Activated T-helper 2 cell treated with anti-CD3 and anti-CD28 coated beads, Interferon-gamma antibody, Interleukin-2, Interleukin-4, amounts not matched to agents 10 μg/mL and 5 μg/mL and 100 μg/mL, durations not matched to agents 14 hours and 24 hours and 36 hours (primary cell): ENCODE measurements at regions of chr7 and their contacts with region 1.

Region 1: DNA sequence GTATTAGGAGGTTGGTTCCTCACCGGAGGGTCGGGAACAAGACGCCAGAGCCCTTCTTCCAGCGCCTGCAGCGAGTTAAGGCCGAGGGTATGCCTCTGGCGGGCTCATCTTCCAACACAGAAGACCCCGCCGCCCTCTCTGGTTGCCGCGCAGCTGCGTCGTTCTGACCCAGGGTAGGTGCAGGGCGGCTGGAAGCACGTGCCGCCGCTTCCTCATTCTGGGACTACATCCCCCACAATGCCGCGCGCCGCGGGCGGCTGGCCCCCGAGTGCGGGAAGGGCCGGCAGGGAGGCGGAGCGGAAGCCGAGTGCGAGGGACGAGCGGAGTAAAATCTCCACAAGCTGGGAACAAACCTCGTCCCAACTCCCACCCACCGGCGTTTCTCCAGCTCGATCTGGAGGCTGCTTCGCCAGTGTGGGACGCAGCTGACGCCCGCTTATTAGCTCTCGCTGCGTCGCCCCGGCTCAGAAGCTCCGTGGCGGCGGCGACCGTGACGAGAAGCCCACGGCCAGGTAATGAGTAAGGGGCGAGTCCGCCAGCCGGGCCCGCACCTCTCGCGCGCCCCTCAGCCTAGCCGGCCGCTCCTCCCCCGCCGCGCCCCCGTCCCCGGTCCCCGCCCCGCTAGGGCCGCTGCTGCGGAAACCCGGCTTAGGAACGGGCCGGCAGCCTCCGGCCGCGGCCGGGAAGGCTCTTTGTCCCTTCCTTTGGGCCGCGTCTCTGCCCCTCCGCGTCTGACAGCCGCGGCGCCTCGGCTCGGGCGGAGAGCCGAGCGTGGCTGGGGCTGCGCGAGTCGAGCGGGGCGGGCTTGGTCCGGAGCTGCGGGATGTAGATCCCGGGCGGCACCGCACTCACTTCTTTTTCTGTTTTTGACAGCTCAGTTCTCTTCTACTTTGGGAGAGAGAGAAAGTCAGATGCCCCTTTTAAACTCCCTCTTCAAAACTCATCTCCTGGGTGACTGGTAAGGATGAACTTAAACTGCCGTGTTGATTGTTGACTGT is at the start of gene CCDC126:
- DNase-seq: peak; percentile 73
- H3K4me3 Mint-ChIP-seq: peak within 1 kb of the TSS; percentile 89
- H3K27ac Mint-ChIP-seq: peak within 1 kb of the TSS; percentile 78
- H3K4me1 Mint-ChIP-seq: peaks cover 53% of the 10 kb centered on the region
- H3K27me3 Mint-ChIP-seq: peaks cover 5% of the 10 kb centered on the region
- total RNA-seq, gene CCDC126: 6.1 and 6.3 TPM in 2 replicates

Region 2: DNA sequence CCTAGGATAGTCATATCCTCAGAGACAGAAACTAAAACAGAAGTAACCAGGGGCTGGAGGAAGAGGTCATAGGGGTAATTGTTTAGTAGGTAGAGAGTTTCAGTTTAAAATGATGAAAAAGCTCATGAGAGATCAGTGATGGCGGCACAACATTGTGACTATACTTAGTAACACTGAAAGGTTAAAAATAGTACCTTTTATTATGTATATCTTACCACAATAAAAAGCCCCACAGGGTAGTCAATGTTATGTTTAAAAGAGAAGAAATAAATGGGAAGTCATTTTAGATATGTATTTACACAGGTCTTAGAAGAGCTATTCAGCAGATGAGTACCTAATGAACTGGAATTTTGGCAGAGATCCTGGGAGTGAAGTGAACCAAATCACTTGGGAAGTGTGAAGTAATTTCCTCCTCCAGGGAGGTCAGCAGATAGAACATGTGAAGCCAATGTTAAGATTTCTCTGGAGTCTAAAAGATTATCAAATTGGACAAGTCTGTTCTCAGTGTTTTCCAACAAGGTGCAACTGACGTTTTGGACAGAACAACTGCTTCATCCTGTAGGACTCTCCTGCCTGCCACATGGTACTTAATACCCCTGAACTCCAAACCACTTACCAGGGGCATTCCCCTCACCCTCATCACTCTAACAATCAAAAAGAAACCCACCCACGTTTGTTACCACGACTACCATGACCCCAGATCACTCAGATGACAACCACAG is 1658.1 kb before region 1 on chr7:
- intact Hi-C with region 1: loop called (anchors 10 kb)
- DNase-seq: peak; percentile 30
- H3K4me3 Mint-ChIP-seq: peak overlapping the region; percentile 41
- H3K27ac Mint-ChIP-seq: peak overlapping the region; percentile 88
- H3K4me1 Mint-ChIP-seq: peaks cover 59% of the 10 kb centered on the region
- H3K27me3 Mint-ChIP-seq: no peaks in the 10 kb centered on the region

Region 3: GRCh38 chr7:23373151-23374004 is 224.0 kb before region 1 on chr7:
- intact Hi-C with region 1: loop called (anchors 5 kb)
- DNase-seq: peak; percentile 28
- H3K4me3 Mint-ChIP-seq: no peak overlapping the region
- H3K27ac Mint-ChIP-seq: peak overlapping the region; percentile 83
- H3K4me1 Mint-ChIP-seq: peaks cover 57% of the 10 kb centered on the region
- H3K27me3 Mint-ChIP-seq: no peaks in the 10 kb centered on the region

Region 4: DNA sequence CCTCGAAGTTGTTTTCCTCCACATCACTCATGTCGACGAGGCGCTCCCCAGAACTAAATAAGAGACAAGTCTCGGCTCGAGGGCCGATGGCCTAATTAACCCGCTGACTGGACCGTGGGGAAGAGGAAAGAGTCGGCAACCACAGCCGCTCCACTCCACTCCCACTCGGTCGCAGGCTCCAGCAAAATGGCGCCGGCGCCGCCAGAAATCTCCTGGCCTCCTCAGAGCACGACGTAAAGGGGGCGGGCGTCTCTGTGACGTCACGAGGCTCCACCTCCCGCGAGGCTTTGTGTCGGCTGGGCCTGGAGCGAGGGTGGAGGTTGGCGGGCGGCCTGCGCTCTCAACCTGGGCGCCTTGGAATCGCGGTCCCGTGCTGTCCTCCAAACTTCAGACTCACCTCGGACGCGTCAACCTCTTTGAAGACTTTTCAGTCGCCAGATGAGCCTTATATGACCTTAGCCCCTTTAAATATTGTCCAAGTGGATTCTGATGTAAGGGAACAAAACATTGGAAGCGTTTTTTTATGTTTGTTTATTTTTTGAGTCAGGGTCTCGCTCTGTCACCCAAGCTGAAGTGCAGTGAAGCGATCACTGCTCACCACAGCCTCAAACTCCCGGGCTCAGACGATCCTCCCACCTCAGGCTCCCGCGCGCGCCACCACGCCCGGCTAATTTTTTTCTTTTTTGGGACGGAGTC is 65.5 kb before region 1 on chr7 and contains the start of gene TRA2A:
- intact Hi-C with region 1: loop called (anchors 2 kb)
- DNase-seq: peak; percentile 94
- H3K4me3 Mint-ChIP-seq: peak within 1 kb of the TSS; percentile 97
- H3K27ac Mint-ChIP-seq: peak within 1 kb of the TSS; percentile 99
- H3K4me1 Mint-ChIP-seq: peaks cover 39% of the 10 kb centered on the region
- H3K27me3 Mint-ChIP-seq: no peaks in the 10 kb centered on the region
- total RNA-seq, gene TRA2A: 105 and 115 TPM in 2 replicates

Region 5: GRCh38 chr7:23570592-23571200 is 26.7 kb before region 1 on chr7:
- intact Hi-C with region 1: loop called (anchors 2 kb)
- DNase-seq: peak; percentile 51
- H3K4me3 Mint-ChIP-seq: no peak overlapping the region
- H3K27ac Mint-ChIP-seq: no peak overlapping the region
- H3K4me1 Mint-ChIP-seq: no peaks in the 10 kb centered on the region
- H3K27me3 Mint-ChIP-seq: peaks cover 15% of the 10 kb centered on the region

Region 6: DNA sequence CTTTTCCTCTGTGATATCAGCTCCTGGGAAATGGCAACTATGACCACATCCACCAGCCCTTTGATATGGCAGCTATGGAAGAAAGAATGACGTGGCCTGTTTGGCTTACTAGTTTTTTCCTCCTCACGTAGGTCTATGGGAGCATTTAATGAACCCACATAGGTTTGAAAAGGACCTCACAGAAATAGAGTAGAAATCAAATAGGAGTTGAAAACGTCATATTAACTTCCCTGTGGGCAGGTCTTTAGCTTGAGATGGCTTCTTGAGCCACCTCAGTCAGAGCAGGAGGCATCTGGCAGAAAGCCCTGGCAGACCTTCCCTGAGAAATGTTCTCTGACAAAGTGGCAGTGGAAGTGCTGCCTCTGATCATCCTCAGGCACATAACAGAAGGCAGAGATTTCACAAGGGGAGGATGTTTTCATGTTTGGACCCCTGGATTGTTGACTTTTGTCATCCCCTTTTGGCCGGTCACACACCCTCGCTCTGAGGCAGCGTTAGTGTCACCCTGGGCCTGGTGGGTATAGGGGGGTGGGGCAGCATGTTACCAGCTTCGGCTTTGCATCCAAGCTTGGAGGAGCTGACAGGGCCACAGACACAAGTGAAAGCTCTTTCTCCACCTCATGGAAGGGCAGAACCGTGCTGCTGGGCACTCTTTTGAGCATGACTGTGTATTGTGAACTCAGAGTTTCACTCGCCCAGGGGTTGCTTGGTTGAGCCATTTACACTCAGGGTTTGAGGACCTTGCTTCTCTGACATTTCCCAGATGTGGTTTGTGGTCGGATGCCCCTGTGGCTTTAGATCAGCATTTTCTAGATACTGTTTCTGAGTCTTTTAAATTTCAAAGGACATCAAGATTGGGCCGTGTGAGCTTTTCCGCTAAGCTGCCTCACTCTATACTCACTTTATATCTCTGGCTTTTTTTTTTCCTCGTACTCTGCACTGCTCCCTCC is 296.8 kb after region 1 on chr7:
- intact Hi-C with region 1: loop called (anchors 1 kb)
- DNase-seq: peak; percentile 52
- H3K4me3 Mint-ChIP-seq: peak overlapping the region; percentile 34
- H3K27ac Mint-ChIP-seq: peak overlapping the region; percentile 91
- H3K4me1 Mint-ChIP-seq: peaks cover 36% of the 10 kb centered on the region
- H3K27me3 Mint-ChIP-seq: peaks cover 16% of the 10 kb centered on the region

Region 7: GRCh38 chr7:24075426-24075810 is 478.0 kb after region 1 on chr7:
- intact Hi-C with region 1: no loop called
- DNase-seq: no peak
- H3K4me3 Mint-ChIP-seq: no peak overlapping the region
- H3K27ac Mint-ChIP-seq: no peak overlapping the region
- H3K4me1 Mint-ChIP-seq: no peaks in the 10 kb centered on the region
- H3K27me3 Mint-ChIP-seq: peaks cover 10% of the 10 kb centered on the region

Region 8: DNA sequence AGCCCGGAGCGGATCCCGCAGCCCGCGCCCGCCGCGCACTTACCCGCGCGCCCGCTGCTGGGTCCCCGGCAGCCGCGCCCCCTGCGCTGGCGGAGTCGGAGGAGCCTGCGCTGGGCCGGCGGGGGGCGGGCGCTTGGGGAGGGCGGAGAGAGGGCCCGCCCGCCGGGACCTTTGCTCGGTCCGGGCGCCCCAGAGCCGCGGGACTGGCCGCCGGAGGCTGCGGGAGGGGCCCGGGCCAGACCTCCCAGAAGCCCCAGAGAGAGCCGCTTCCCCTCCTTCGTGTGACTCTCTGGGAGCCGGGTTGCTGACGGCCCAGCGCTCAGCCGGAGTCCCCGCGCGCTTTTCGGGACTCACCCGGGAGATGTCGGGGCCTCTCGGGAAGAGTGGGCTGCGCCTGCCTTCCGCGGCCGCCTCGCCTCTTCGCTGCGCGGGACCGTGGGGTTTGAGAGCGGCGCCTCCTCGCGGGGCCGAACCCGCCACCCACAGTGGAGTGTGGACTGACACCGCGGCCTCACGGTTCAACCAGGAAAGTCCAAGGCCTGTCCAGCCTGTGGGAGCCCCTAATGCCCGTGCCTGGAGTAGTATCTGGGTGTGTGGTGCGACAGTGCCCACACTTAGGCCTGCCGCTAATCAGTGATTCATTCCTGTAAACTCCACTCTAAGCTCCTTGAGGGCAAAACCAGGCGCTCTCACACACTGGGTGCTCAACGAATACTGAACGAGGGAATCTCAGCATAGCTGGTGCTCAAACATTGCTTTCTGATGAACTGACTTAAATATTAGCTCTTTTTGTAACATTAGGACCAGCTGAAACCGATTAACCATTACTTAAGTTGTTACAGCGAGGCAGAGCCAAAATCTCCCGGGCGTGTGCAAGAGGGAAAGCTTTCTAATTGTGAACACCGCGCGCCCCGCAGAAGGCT is 1160.2 kb after region 1 on chr7 and contains the start of gene GSDME:
- intact Hi-C with region 1: loop called (anchors 1 kb)
- DNase-seq: peak; percentile 24
- H3K4me3 Mint-ChIP-seq: peak within 1 kb of the TSS; percentile 87
- H3K27ac Mint-ChIP-seq: peak within 1 kb of the TSS; percentile 80
- H3K4me1 Mint-ChIP-seq: peaks cover 33% of the 10 kb centered on the region
- H3K27me3 Mint-ChIP-seq: peaks cover 52% of the 10 kb centered on the region
- total RNA-seq, gene GSDME: 8.7 and 9.6 TPM in 2 replicates